Gastrocnemius medialis (tissue), 4 donors: ENCODE measurements at regions of chr1 and their contacts with region 1.

Region 1: DNA sequence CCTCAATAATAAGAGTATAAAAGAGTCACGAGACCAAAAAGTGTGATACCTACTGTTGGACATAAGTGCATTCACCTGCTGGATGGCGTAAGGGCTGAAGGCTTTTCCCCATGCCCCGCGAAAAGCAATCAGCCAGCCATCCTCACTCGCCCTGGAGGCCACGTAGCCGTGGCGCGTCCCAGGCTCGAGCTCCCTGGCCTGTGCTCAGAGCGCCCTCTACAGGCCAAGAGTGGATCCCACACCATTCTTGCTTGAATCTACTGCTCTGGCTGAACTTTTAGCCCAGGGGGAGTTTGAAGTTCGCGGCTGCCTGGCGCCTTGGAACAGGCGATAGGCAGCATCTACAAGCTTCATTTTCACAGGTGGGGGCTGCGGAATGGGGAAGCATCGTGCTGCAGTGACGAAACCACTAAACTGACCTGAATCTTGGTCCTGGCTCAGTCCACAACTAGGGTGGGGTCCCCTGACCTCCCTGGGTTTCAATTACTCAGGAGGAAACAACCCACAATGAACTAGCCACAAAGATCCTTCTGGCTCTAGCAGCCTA is 70.3 kb upstream of the SERBP1 start:
- DNase-seq: peak; percentile 61 to 81
- ATAC-seq: peak; percentile 85 to 96
- H3K4me3 ChIP-seq: no peak overlapping the region
- H3K27ac ChIP-seq: no peak overlapping the region
- H3K4me1 ChIP-seq: no peaks in the 10 kb centered on the region
- H3K27me3 ChIP-seq: no peaks in the 10 kb centered on the region
- CTCF ChIP-seq: peak; percentile 92 to 99 (median 95)
- POLR2A ChIP-seq: no peak

Region 2: GRCh38 chr1:66764994-66765578 is 735.4 kb before region 1 on chr1:
- in situ Hi-C with region 1: loop called in 3 of 4 experiments (anchors 25 kb)
- intact Hi-C with region 1: loop called (anchors 10 kb)
- DNase-seq: no peak
- ATAC-seq: peak in 1 of 2 donors; percentile 51
- H3K4me3 ChIP-seq: no peak overlapping the region
- H3K27ac ChIP-seq: no peak overlapping the region
- H3K4me1 ChIP-seq: no peaks in the 10 kb centered on the region
- H3K27me3 ChIP-seq: no peaks in the 10 kb centered on the region
- CTCF ChIP-seq: peak; percentile 49 to 67 (median 58)
- POLR2A ChIP-seq: no peak

Region 3: DNA sequence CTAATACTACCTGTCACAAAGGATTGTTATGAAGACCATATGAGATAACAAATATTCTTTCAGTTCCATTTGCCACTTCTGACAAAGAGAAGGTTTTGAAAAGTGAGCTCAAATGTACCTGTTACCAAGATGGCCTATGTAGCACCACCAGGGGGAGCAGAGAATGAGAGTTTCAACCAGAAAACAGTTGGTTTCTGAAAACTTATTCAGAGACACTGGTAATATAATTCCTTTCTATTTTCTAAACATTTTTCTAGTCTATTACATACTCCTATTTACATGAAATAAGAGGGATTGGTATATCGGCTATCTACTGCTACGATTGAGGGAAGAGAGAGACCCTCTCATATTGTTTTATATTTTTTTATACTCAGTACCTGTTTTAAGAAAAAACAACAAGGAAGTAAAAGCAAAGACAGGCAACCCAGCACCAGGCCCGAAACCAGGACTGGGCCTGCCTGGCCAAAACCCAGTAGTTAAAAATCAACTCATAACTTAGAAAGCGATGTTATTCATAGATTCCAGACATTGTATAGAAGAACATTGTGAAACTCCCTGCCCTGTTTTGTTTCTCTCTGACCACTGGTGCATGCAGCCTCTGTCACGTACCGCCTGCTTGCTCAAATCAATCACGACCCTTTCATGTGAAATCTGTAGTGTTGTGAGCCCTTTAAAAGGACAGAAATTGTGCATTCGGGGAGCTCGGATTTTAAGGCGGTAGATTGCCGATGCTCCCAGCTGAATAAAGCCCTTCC is 285.9 kb before region 1 on chr1:
- in situ Hi-C with region 1: no loop called
- intact Hi-C with region 1: loop called (anchors 5 kb)
- DNase-seq: no peak
- ATAC-seq: no peak
- H3K4me3 ChIP-seq: no peak overlapping the region
- H3K27ac ChIP-seq: no peak overlapping the region
- H3K4me1 ChIP-seq: no peaks in the 10 kb centered on the region
- H3K27me3 ChIP-seq: no peaks in the 10 kb centered on the region
- CTCF ChIP-seq: peak in 3 of 5 experiments; percentile 10 to 37 (median 24)
- POLR2A ChIP-seq: no peak

Region 4: GRCh38 chr1:67230539-67230938 is 269.9 kb before region 1 on chr1:
- in situ Hi-C with region 1: loop called (anchors 5 to 10 kb)
- intact Hi-C with region 1: loop called (anchors 1 kb)
- DNase-seq: no peak
- ATAC-seq: no peak
- H3K4me3 ChIP-seq: no peak overlapping the region
- H3K27ac ChIP-seq: no peak overlapping the region
- H3K4me1 ChIP-seq: no peaks in the 10 kb centered on the region
- H3K27me3 ChIP-seq: no peaks in the 10 kb centered on the region
- CTCF ChIP-seq: no peak
- POLR2A ChIP-seq: no peak

Region 5: GRCh38 chr1:67347688-67348472 is 152.6 kb before region 1 on chr1:
- in situ Hi-C with region 1: loop called in 2 of 4 experiments (anchors 5 kb)
- intact Hi-C with region 1: loop called (anchors 1 kb)
- DNase-seq: peak in 1 of 2 donors; percentile 67
- ATAC-seq: peak; percentile 84 to 96
- H3K4me3 ChIP-seq: no peak overlapping the region
- H3K27ac ChIP-seq: peak overlapping the region in 2 of 4 donors; percentile 3 to 21
- H3K4me1 ChIP-seq: peaks cover 0 to 10% of the 10 kb centered on the region in 2 donors
- H3K27me3 ChIP-seq: no peaks in the 10 kb centered on the region
- CTCF ChIP-seq: peak; percentile 68 to 81 (median 76)
- POLR2A ChIP-seq: no peak

Region 6: DNA sequence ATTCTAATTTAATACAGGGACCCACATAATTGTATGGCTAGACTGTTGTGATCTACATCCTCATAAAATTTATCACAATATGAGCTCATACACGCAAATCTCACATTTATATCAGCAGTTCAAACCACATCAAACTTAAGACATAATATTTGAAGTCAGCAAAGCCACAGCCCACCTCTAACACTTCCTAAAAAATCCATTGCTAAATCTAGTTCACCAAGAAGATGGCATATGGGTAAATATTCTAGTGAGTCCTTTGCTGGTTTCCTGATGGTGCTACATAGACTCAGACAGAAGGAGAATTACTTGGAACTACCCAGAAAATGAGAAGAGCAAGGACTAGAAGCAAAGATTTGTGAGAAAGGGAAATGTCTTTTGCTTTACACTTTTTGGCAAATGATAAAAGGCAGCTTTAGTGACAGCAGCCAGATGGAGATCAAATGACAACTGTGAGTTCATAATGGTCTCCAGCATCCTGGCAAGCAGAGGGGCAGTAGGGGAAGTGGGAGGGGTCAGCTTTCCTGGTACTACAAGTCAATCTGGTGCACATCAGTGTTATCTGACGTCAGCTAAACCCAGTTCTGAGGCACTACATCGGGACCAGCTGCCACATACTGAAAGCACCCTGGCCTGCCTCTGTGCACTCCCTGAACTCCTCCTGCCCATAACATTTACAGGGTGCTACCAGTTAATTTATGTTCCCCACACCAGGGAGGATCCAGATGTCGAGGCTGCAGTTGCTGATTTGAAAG is 173.9 kb after region 1 on chr1:
- in situ Hi-C with region 1: no loop called
- intact Hi-C with region 1: no loop called
- DNase-seq: peak; percentile 28 to 57
- ATAC-seq: peak; percentile 81 to 86
- H3K4me3 ChIP-seq: no peak overlapping the region
- H3K27ac ChIP-seq: peak overlapping the region; percentile 38 to 66 (median 53)
- H3K4me1 ChIP-seq: peaks cover 12 to 20% of the 10 kb centered on the region in 2 donors
- H3K27me3 ChIP-seq: no peaks in the 10 kb centered on the region
- CTCF ChIP-seq: no peak
- POLR2A ChIP-seq: no peak

Region 7: GRCh38 chr1:68346188-68346808 is 845.8 kb after region 1 on chr1:
- in situ Hi-C with region 1: loop called in 1 of 4 experiments (anchors 25 kb)
- intact Hi-C with region 1: no loop called
- DNase-seq: no peak
- ATAC-seq: no peak
- H3K4me3 ChIP-seq: no peak overlapping the region
- H3K27ac ChIP-seq: no peak overlapping the region
- H3K4me1 ChIP-seq: no peaks in the 10 kb centered on the region
- H3K27me3 ChIP-seq: no peaks in the 10 kb centered on the region
- CTCF ChIP-seq: peak; percentile 11 to 62 (median 33)
- POLR2A ChIP-seq: no peak